ENCODE measurements at regions of chr6 and their contacts with region 1.

Region 1: GRCh38 chr6:34526992-34527728 is 29.0 kb downstream of the SPDEF start:
- DNase-seq: peak; percentile 93 to 97 (median 96)
- H3K4me3 ChIP-seq: peak overlapping the region in 1 of 4 donors; percentile 42
- H3K27ac ChIP-seq: peak overlapping the region in 1 of 5 donors; percentile 8
- H3K4me1 ChIP-seq: peaks cover 3 to 4% of the 10 kb centered on the region in 2 donors
- H3K27me3 ChIP-seq: no peaks in the 10 kb centered on the region
- CTCF ChIP-seq: peak; percentile 64 to 85 (median 71)
- POLR2A ChIP-seq: no peak

Region 2: DNA sequence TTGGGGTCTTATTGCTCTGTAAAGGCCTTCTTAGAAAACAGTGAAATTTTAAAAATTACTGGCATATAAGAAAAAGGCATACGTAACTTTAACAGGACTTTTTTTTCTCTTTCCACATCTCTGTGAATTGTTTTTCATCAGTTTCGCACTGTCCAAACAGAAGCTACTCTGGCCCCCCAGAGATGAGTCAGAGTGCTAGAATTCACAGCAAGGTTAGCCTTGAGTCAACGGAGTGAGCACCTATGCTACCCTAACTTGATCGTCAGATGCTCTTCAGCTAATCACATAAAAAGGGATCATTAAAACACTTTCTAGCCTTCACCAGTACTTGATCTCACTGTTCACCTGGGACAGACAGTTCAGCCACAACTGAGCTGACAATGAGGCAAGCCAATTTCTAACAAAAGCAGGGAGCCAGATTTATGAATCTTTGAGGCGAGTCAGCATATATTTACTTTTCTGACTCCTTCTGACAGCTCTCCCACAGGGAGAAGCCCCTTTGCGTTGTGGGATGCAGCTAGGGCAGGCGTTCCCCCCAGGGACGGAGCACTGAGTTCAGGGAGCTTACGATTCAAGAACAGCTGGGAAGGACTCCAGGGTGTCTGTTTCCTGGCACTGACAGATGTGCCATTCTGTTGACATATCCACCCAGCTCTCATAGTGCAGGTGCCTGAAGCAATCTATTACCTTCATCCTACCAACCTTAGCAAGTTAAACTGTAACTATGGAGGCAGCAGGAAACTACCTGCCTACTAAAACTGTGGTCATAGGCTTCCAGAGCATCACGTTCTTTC is 75.4 kb after region 1 on chr6:
- intact Hi-C with region 1: loop called (anchors 5 to 10 kb)
- DNase-seq: no peak
- H3K4me3 ChIP-seq: no peak overlapping the region
- H3K27ac ChIP-seq: no peak overlapping the region
- H3K4me1 ChIP-seq: peaks cover 3 to 35% of the 10 kb centered on the region in 2 donors
- H3K27me3 ChIP-seq: no peaks in the 10 kb centered on the region
- CTCF ChIP-seq: no peak
- POLR2A ChIP-seq: no peak

Region 3: DNA sequence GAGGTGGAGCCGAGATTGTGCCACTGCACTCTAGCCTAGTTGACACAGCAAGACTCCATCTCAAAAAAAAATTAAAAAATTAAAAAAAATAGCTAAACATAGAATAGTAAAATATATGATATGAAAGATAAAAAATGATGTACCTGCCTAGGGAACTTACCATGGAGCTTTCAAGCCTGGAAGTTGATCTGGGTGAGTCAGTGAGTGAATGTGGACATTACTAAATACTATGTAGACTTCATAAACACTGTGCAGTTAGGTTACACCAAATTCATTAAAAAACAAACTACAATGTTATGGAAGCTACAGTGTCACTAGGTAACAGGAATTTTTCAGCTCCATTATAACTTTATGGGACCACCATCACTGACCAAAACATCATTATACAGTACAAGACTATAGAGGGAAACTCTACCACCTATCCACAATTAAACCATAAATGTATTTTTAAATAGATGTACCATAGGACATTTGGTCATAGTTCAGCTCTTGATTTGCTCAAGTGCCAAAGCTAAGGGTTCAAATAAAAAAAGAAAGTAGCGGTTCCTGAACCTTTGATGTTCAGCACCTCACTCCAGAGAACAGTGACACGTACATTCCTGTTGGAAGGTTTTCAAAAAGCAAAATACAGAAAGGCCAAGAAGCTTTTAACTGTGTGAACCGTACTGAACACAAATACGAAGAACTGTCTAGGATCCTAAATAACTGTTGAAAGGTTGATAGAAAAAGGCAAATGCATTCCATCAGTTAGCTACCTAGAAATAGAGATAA is 81.3 kb after region 1 on chr6:
- intact Hi-C with region 1: loop called (anchors 5 to 10 kb)
- DNase-seq: no peak
- H3K4me3 ChIP-seq: no peak overlapping the region
- H3K27ac ChIP-seq: no peak overlapping the region
- H3K4me1 ChIP-seq: peaks cover 0 to 3% of the 10 kb centered on the region in 2 donors
- H3K27me3 ChIP-seq: no peaks in the 10 kb centered on the region
- CTCF ChIP-seq: no peak
- POLR2A ChIP-seq: no peak

Measured in adrenal gland (tissue), 19 donors.